ENCODE measurements at regions of chr16 and their contacts with region 1.

Region 1: GRCh38 chr16:69396187-69397061 is 10.6 kb upstream of the TERF2 start:
- DNase-seq: peak; percentile 82
- H3K4me3 ChIP-seq: no peak overlapping the region
- H3K27ac ChIP-seq: peak overlapping the region; percentile 80 to 87
- H3K4me1 ChIP-seq: peaks cover 6% of the 10 kb centered on the region
- H3K27me3 ChIP-seq: no peaks in the 10 kb centered on the region
- CTCF ChIP-seq: peak; percentile 71 to 94 (median 82)
- POLR2A ChIP-seq: no peak

Region 2: DNA sequence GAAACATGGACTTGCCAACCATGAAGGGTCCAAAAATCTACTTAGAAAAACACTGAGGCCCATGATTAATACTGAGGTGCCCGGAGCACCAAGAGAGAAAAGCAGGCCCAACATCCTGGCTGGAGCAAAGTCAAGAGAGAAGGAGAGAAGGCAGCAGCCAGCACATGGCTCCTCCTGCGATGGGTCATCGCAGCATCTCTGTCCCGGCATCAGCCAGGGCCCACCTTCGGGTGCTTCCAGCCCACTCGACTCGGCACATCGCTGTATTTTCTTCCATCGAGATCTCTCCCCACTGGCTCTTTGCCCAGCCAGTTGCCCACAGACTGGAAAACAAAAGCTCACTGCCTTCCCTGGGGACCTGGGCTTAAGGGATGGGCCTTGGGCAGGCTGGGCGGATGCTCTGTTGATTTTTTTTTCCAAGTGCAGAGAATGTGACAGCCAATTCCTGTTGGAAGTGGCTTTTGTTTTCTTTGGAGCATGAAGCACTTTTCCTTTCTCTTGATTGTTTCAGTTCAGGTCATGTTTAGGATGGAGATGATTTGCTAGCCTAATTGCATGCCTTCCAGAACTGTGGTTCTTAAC is 86.1 kb after region 1 on chr16:
- intact Hi-C with region 1: loop called (anchors 5 kb)
- DNase-seq: peak; percentile 21
- H3K4me3 ChIP-seq: no peak overlapping the region
- H3K27ac ChIP-seq: peak overlapping the region; percentile 74 to 75
- H3K4me1 ChIP-seq: peaks cover 8% of the 10 kb centered on the region
- H3K27me3 ChIP-seq: no peaks in the 10 kb centered on the region
- CTCF ChIP-seq: no peak
- POLR2A ChIP-seq: no peak

Region 3: DNA sequence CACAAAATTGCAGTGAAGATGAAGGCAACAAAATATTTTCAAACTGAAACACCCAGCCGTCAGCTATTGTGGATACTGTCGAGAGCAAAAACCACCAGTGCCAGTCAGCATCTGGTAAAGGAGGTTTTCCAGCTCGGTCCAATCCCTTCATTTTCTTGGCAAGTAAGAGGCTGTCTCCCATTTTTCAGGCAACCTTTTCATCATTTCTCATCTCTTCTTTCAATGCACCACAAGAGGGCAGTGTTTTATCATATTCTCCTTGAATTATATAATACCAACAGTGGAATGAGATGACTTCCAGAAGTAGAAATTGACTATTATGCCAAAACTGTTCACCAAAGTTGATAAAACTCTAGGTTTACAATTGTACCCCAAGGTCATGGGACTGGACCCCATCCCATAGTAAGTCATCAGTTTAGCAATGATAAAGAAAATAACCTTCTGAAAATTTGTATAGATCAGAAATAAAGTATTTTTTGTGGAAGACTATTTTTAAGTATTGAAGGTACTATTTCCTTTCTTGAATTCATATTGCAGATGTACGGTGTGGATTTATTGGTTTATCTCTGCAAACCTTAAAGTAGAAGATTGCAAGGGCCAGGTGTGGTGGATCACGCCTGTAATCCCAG is 313.1 kb after region 1 on chr16:
- intact Hi-C with region 1: loop called (anchors 5 kb)
- DNase-seq: peak; percentile 27
- H3K4me3 ChIP-seq: no peak overlapping the region
- H3K27ac ChIP-seq: peak overlapping the region in 1 of 2 donors; percentile 4
- H3K4me1 ChIP-seq: peaks cover 8% of the 10 kb centered on the region
- H3K27me3 ChIP-seq: no peaks in the 10 kb centered on the region
- CTCF ChIP-seq: peak; percentile 57 to 90 (median 82)
- POLR2A ChIP-seq: no peak

Region 4: GRCh38 chr16:69754469-69755310 is 358.3 kb after region 1 on chr16 and contains the start of gene NOB1:
- intact Hi-C with region 1: loop called (anchors 2 kb)
- DNase-seq: peak; percentile 95
- H3K4me3 ChIP-seq: peak within 1 kb of the TSS; percentile 50 to 78
- H3K27ac ChIP-seq: peak within 1 kb of the TSS; percentile 49 to 60
- H3K4me1 ChIP-seq: no peaks in the 10 kb centered on the region
- H3K27me3 ChIP-seq: no peaks in the 10 kb centered on the region
- CTCF ChIP-seq: peak; percentile 94 to 100 (median 100)
- POLR2A ChIP-seq: peak; percentile 70
- total RNA-seq, gene NOB1: 29.8 to 44.1 TPM